Mammary epithelial cell (primary cell): ENCODE measurements at regions of chr1 and their contacts with region 1.

Region 1: DNA sequence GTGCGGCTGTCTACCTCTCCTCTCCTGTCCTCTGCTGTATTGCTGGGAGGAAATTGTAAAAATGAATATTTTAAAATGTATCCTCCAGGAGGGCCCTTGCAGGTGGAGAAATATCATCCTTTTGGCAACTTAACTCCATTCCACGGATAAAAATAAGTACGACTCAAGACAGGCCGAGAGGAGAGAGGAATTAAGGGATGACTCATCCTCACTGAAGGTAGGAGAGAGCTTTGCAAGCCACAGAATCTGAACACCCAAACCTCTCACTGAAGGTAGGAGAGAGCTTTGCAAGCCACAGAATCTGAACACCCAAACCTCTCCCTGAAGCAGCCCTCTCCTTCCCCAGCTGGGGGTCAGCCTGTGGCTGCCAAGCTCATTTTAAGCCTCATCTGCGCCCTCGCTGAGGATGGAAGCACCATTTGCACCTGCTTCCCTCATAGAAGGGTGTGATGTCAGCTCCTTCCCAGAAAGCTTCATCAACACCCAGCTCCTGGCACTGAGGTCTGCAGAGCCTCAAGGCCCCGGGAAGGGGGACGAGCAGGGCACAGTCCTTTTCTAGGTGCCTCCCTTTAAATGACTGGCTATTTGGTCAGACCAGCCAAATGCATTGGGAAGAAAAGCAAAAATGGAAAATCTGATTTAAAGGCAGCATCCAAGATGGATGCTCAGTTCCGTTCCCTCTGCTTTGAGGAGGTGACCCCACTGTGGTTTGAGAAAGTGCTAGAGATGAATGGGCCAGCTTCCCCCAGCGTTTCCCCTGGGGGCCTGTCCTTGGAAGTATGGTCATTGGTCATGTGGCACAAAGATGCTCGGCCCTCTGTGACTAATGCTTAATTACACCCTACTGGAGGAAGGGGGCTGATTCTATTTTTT is 12.9 kb upstream of the SELENON start:
- DNase-seq: no peak
- H3K4me3 ChIP-seq: no peak overlapping the region
- H3K27ac ChIP-seq: no peak overlapping the region
- H3K4me1 ChIP-seq: no peaks in the 10 kb centered on the region
- H3K27me3 ChIP-seq: no peaks in the 10 kb centered on the region
- CTCF ChIP-seq: no peak

Region 2: GRCh38 chr1:25737130-25737529 is 50.0 kb before region 1 on chr1:
- CTCF ChIA-PET with region 1: no interaction called
- dilution Hi-C with region 1: loop called (anchors 5 kb)
- in situ Hi-C with region 1: no loop called
- intact Hi-C with region 1: no loop called
- DNase-seq: no peak
- H3K4me3 ChIP-seq: no peak overlapping the region
- H3K27ac ChIP-seq: no peak overlapping the region
- H3K4me1 ChIP-seq: no peaks in the 10 kb centered on the region
- H3K27me3 ChIP-seq: no peaks in the 10 kb centered on the region
- CTCF ChIP-seq: no peak